ENCODE measurements at regions of chr11 and their contacts with region 1.

Region 1: DNA sequence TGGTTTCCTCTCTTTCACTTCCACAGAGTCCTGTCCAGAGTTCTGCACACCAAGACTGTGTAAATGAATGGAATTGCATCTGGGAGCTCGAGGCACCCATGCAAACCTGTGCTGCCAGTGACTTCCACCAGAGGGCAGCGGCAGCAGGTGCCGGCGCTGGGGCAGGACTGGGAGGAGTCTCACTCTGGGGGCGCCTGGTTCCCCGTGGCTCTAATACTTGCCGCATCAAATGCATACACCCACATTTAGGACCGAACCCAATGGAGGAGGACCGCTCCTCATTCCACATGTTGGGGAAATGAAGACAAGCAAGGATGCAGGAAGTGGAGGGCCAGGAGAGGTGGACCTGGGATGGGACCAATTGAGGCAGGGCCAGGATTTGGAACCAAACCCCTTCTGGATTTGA is 1.1 kb upstream of the CD6 start:
- DNase-seq: peak in 1 of 2 experiments; percentile 86
- H3K4me3 ChIP-seq: no peak overlapping the region
- H3K27ac ChIP-seq: no peak overlapping the region
- H3K4me1 ChIP-seq: no peaks in the 10 kb centered on the region
- H3K27me3 ChIP-seq: no peaks in the 10 kb centered on the region; a peak in 2 of 7 replicates
- CTCF ChIP-seq: peak; percentile 88 to 96 (median 89)
- EP300 ChIP-seq: no peak
- POLR2A ChIP-seq: no peak
- RAD21 ChIP-seq: peak; percentile 77 to 84

Region 2: DNA sequence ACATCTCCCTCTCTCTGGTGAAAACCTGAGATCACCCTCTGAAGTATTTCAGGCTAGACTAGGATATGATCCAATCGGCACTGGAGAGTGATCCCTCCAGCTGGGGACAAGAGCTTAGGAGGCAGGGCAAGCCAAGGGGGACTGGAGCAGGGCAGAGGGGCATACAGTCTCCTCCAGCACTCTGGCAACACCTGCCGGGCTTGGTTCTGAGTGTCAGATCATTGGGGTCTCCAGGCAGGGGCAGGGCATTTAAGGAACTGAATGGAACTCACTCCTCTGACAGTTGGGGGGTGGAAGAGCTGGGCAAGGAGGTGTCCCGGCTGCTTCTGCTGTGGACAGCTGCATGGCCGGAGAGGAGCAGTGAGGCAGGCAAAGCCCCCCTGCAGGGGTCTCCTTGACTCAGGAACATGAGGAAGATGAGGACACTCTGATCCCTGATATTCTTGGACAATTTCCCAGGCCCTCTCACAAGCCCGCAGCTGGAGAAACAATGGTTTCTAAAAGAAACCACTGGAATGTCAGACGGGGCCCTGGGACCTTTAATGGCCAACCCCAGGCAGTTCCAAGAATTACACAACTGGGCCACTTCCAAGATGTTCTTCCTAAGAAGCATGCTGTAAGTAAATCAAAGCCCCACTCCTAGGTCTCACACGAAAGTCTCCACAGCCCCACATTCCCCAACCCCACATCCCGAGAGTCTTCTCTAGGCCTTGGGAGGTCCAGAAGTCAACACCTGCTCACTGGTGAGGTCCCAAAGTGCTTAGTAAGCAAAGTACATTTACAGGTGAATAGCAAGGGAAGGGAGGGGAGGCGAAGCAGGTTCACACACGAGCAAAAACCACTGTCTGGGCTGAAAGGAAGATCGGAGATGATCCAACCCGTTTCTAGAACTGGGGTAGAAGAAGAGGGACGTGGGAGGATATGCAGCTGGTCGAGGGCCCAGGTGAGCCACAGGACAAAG is 129.6 kb before region 1 on chr11:
- CTCF ChIA-PET with region 1: no interaction called
- POLR2A ChIA-PET with region 1: no interaction called
- DNase-seq: no peak
- H3K4me3 ChIP-seq: peak overlapping the region in 1 of 4 experiments; percentile 79; a peak in 1 of 8 replicates
- H3K27ac ChIP-seq: peak overlapping the region; percentile 67; the same call in 1 of the 2 replicates
- H3K4me1 ChIP-seq: peaks cover 0 to 21% (median 7%) of the 10 kb centered on the region in 4 experiments; a peak in 6 of 7 replicates
- H3K27me3 ChIP-seq: no peaks in the 10 kb centered on the region; a peak in 1 of 7 replicates
- CTCF ChIP-seq: no peak
- EP300 ChIP-seq: no peak
- POLR2A ChIP-seq: no peak
- RAD21 ChIP-seq: no peak

Region 3: GRCh38 chr11:60944490-60945294 is 25.7 kb before region 1 on chr11:
- CTCF ChIA-PET with region 1: interaction called, 10 read pairs
- POLR2A ChIA-PET with region 1: no interaction called
- DNase-seq: no peak
- H3K4me3 ChIP-seq: no peak overlapping the region
- H3K27ac ChIP-seq: no peak overlapping the region
- H3K4me1 ChIP-seq: peaks cover 0 to 11% (median 7%) of the 10 kb centered on the region in 4 experiments; a peak in 6 of 7 replicates
- H3K27me3 ChIP-seq: peaks cover 0 to 1% (median 0%) of the 10 kb centered on the region in 4 experiments; a peak in 1 of 7 replicates
- CTCF ChIP-seq: peak; percentile 41 to 59 (median 52)
- EP300 ChIP-seq: no peak
- POLR2A ChIP-seq: no peak
- RAD21 ChIP-seq: peak; percentile 22 to 44; a peak in 3 of 4 replicates

Region 4: GRCh38 chr11:60951899-60952741 is 18.3 kb before region 1 on chr11 and contains the start of gene SLC15A3:
- CTCF ChIA-PET with region 1: interaction called, 11 read pairs
- POLR2A ChIA-PET with region 1: no interaction called
- DNase-seq: peak in 1 of 2 experiments; percentile 72
- H3K4me3 ChIP-seq: peak within 1 kb of the TSS; percentile 28 to 66 (median 48)
- H3K27ac ChIP-seq: peak within 1 kb of the TSS; percentile 26; the same call in 1 of the 2 replicates
- H3K4me1 ChIP-seq: peaks cover 0 to 23% (median 14%) of the 10 kb centered on the region in 4 experiments; a peak in 6 of 7 replicates
- H3K27me3 ChIP-seq: peaks cover 0 to 15% (median 8%) of the 10 kb centered on the region in 4 experiments; a peak in 4 of 7 replicates
- CTCF ChIP-seq: no peak
- EP300 ChIP-seq: no peak
- POLR2A ChIP-seq: no peak
- RAD21 ChIP-seq: no peak
- total RNA-seq, gene SLC15A3: 25.8 and 33.7 TPM in 2 replicates

Region 5: DNA sequence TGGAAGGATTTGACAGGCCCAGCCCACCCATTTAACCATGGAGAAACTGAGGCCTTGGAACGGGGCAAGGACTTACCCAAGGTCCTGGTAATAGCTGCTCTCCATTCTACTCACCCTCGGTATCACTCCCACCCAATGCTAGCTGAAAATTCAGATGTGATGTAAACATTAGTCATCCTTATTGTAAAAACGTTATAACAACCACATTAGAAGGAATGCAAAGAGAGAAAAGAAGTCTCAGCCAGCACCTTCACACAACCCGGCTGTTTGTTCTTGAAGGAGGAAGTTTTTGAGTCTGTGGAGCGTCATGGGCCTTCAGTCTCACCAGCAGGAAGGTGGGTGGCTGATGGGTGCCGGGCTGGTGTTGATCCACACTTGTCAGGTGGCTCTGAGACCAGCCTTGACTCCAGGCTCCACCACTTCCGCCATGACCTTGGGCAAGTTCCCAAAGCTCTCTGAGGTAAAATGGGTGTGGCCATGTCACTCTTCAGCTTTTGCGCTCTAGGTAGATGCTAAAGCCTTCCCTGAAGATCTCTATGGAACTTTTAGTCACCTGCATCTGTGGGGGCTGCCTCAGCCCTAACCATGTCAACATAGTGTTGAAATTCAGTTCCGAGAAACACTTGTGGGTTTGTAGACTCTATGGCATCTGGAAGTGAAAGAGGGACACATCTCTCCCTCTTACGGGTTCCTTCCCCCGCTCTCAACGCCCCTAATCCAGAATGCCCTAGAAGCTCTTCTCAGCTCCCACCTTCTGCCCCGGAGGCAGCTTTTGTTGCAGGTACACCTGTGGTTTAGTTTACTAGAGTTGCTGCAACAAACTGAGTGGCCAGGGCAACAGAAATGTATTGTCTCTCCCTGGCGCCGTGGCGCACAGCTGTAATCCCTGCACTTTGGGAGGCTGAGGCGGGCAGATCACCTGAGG is 15.9 kb after region 1 on chr11:
- CTCF ChIA-PET with region 1: interaction called, 10 read pairs
- POLR2A ChIA-PET with region 1: interaction called, 3 read pairs
- DNase-seq: no peak
- H3K4me3 ChIP-seq: no peak overlapping the region
- H3K27ac ChIP-seq: no peak overlapping the region
- H3K4me1 ChIP-seq: no peaks in the 10 kb centered on the region
- H3K27me3 ChIP-seq: no peaks in the 10 kb centered on the region; a peak in 1 of 7 replicates
- CTCF ChIP-seq: no peak
- EP300 ChIP-seq: no peak
- POLR2A ChIP-seq: no peak
- RAD21 ChIP-seq: no peak

Region 6: DNA sequence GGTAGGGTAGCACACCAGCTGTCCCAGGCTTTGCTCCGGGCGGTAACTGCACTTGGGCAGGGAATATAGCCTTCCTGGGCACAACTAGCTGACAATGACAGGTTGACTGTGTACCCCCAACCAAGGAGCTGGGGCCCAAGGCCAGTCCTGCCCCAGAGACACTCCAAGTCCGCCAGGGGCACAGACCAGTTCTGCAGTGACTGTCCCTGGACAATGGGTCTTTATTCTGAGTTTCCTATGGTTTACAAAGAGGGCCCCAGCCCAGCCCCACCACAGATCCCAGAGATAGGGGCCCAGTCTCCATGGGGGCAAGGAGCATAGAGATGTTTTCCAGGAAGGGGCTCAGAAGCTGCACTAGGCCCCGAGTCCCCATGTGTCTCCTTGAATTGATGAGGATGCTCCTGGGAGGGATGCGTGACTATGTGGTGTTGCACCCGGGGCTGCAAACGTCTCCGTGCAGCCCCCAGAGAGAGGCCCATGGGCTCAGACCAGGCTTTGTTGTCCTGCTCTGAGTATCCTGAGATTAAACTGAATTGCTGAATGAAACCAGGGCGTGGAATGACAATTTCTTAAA is 49.5 kb after region 1 on chr11:
- CTCF ChIA-PET with region 1: interaction called, 10 read pairs
- POLR2A ChIA-PET with region 1: no interaction called
- DNase-seq: no peak
- H3K4me3 ChIP-seq: no peak overlapping the region
- H3K27ac ChIP-seq: no peak overlapping the region
- H3K4me1 ChIP-seq: peaks cover 0 to 4% (median 2%) of the 10 kb centered on the region in 4 experiments; a peak in 5 of 7 replicates
- H3K27me3 ChIP-seq: peaks cover 0 to 7% (median 4%) of the 10 kb centered on the region in 4 experiments; a peak in 4 of 7 replicates
- CTCF ChIP-seq: no peak
- EP300 ChIP-seq: no peak
- POLR2A ChIP-seq: no peak
- RAD21 ChIP-seq: no peak

Region 7: DNA sequence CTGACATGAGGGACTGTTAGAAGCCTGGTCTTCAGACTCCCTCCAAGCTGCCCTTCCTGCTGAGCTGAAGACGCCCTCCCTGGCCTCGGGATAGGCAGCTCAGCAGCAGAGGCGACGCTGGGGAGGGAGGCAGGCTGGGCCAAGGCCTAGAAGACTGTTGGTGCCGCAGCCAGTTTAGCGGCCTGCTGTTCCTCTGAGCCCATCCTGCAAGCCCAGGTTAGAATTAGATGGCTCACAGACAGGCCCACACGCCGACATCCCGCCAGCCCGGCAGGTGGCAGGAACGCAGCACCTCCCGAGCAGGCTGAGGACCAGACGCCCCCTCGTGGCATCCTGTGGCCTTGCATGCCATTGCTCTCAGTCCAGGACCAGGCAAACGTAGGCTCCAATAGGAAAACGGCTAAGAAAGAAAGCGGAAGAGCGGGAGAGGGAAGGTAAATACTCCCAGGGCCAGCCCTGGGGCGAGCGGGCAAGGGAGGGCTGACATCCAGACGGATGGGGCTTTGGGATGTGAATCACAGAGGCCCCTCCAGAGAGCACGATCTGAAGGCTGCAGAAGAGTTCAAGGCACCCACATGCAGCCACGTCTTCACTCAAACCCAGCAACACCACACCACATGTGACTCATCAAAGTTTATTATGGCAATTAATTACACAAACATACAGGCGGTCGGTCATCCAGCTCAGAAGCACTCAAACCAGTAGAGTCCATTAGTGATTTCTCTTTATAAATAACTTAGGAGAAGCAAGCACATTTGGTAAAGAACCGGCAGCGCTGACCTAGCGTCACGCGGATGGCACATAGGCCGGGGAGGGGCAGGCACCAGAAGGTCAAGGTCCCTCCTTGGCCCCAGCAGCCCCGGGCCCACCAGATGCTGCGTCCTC is 159.5 kb after region 1 on chr11:
- CTCF ChIA-PET with region 1: interaction called, 14 read pairs
- POLR2A ChIA-PET with region 1: no interaction called
- DNase-seq: peak; percentile 91 to 98
- H3K4me3 ChIP-seq: no peak overlapping the region
- H3K27ac ChIP-seq: no peak overlapping the region
- H3K4me1 ChIP-seq: peaks cover 0 to 8% (median 5%) of the 10 kb centered on the region in 4 experiments; a peak in 4 of 7 replicates
- H3K27me3 ChIP-seq: no peaks in the 10 kb centered on the region
- CTCF ChIP-seq: peak; percentile 100
- EP300 ChIP-seq: no peak
- POLR2A ChIP-seq: no peak
- RAD21 ChIP-seq: peak; percentile 98

Measured in H1 (cell line).